Activated naive CD4-positive, alpha-beta T cell treated with anti-CD3 and anti-CD28 coated beads for 36 hours (primary cell): ENCODE measurements at regions of chr3 and their contacts with region 1.

Region 1: DNA sequence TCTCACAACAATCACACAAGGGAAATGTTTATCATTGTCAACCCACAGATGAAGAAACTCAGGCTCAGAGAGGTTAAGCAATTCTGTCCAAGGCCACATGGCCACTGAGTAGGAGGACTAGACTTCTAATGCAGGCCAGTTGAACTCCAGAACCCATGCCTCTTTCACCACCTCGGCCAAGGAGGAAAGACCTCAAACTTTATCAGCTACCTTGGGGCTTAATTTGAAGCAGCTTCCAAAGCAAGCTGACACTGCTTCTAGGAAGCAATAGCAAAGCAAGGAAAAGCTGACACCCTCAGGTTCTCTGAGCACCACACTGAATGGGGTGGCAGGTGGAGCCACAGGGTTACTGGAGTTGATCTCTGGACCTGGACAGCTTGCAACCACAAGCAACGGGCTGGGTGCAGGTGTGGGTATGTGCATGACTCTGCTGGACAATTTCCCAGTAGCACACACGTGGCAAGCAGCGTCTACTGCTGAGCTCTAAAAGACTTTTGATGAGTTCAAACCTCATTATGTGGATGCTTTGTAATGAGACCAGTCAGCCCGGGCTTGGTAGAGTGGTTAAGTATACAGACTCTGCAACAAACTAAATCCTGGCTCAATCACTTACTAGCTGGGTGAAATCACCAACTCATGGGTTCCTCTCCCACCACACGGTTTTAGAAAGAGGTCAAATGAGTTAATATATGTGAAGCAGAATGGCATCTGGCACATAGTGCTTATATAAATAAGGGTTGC is 23.1 kb downstream of the CCNL1 start:
- DNase-seq: no peak
- H3K4me3 Mint-ChIP-seq: no peak overlapping the region
- H3K27ac Mint-ChIP-seq: no peak overlapping the region
- H3K4me1 Mint-ChIP-seq: peaks cover 11% of the 10 kb centered on the region
- H3K27me3 Mint-ChIP-seq: no peaks in the 10 kb centered on the region

Region 2: DNA sequence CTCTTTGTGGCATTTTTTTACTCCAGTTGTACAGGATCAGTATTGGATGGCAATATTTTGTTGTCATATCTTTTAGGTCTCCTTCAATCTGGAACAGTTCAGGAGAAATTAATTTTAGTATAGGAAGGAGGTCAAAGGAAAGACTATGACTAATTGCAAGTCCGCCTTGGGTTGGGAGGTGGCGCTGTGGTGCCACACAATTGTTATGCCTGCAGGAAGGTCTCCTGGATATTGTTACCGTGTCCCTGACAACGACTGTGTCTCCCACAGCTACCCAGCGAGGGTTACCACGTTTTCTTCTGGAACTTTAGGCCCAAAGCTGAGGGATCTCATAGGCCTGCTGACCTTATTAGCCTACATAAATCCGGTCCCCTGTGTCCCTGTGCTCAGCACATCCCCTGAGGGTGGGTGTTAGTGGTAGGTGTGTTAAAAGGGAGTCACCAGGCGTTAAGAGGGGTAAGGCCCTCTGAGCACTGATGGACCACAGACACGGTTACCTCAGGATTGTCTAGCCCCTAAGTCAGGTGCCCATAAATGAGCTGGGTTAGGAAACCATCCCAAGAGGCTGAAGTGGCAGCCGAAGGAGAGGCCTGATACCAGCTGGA is 984.9 kb before region 1 on chr3:
- CTCF ChIA-PET with region 1: interaction called, 3 read pairs
- intact Hi-C with region 1: loop called (anchors 1 kb)
- DNase-seq: peak; percentile 77
- H3K4me3 Mint-ChIP-seq: no peak overlapping the region
- H3K27ac Mint-ChIP-seq: no peak overlapping the region
- H3K4me1 Mint-ChIP-seq: peaks cover 3% of the 10 kb centered on the region
- H3K27me3 Mint-ChIP-seq: no peaks in the 10 kb centered on the region

Region 3: DNA sequence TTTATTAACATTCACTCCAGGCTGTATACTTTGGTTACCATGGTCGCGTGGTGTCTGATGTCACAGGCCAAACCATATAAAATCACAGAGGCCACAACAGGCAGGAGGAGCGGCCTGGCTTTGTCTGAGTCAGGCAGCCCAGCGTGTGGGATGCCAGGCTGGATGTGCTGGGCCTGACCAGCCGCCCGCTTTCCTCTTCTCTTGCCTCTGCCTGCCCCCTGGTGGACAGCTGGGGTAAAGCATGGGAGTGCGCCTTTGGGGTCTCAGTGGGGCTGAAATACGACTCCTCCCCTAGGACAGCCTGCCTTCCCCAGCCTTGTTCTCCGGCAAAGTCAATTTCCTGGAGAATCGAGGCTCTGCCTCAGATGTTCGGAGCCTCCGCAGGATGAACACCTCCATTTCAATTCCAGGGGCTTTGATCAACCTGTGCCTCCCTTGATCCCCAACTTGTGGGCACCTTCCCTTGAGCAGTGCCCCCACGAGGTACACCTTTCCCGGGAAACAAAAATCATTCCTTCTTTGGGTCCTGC is 55.1 kb before region 1 on chr3:
- CTCF ChIA-PET with region 1: interaction called, 54 read pairs
- intact Hi-C with region 1: no loop called
- DNase-seq: peak; percentile 86
- H3K4me3 Mint-ChIP-seq: no peak overlapping the region
- H3K27ac Mint-ChIP-seq: no peak overlapping the region
- H3K4me1 Mint-ChIP-seq: peaks cover 9% of the 10 kb centered on the region
- H3K27me3 Mint-ChIP-seq: no peaks in the 10 kb centered on the region

Region 4: GRCh38 chr3:157104928-157105652 is 31.7 kb before region 1 on chr3:
- CTCF ChIA-PET with region 1: interaction called, 11 read pairs
- intact Hi-C with region 1: no loop called
- DNase-seq: no peak
- H3K4me3 Mint-ChIP-seq: no peak overlapping the region
- H3K27ac Mint-ChIP-seq: no peak overlapping the region
- H3K4me1 Mint-ChIP-seq: peaks cover 21% of the 10 kb centered on the region
- H3K27me3 Mint-ChIP-seq: no peaks in the 10 kb centered on the region

Region 5: DNA sequence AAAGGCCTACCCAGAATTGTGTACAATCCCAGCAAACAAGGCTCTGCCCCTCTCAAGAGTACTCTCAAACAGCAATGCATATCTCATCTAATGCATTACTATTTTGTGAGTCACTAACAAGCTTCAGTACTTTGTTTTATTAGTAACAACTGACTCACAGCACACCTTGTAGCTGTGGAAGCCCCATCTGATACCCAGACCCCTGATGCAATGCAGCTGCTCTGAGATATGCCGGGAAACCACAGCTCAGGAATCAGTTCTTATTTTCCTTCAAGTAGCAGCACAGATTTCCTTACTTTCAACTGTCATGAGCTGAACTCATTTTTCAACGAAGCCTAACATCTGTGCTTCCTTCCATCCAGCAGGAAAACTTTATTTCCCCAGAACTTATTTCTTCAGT is 14.7 kb before region 1 on chr3:
- CTCF ChIA-PET with region 1: interaction called, 20 read pairs
- intact Hi-C with region 1: no loop called
- DNase-seq: peak; percentile 52
- H3K4me3 Mint-ChIP-seq: no peak overlapping the region
- H3K27ac Mint-ChIP-seq: peak overlapping the region; percentile 16
- H3K4me1 Mint-ChIP-seq: peaks cover 26% of the 10 kb centered on the region
- H3K27me3 Mint-ChIP-seq: no peaks in the 10 kb centered on the region

Region 6: DNA sequence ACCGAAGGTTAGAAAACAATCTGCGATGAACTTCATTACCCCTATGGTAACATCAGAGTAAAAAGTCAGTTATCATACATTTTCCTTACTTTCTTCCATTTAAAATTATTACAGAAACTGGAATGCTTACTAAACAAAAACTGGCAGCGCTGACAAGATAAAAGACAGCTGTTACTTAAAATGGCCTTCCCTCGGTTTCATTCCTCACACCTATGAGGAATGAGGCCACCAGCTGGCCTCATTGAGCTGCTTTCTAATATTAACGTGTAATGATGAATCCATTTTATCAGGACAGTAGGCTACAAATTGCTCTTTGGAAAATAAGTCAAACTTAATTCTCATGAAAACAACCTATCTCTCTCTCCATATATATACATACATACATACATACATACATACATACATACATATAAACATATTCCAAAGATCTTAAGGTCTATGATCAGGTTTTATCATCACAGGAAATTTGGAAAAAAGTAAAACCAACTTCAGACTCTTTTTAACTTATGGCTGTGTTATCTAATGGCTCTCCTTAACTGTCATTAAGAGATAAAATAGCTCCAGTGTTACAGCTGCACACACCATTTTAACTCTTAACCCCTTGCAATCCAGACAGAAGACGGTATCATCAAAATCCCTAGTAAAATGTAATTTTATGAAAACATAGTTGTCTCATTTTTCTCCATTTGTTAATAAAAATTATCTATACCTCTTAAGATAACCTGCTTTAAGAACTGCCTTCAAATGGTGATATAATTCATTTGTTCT is 17.9 kb after region 1 on chr3:
- CTCF ChIA-PET with region 1: interaction called, 28 read pairs
- intact Hi-C with region 1: no loop called
- DNase-seq: no peak
- H3K4me3 Mint-ChIP-seq: peak overlapping the region; percentile 68
- H3K27ac Mint-ChIP-seq: peak overlapping the region; percentile 79
- H3K4me1 Mint-ChIP-seq: peaks cover 66% of the 10 kb centered on the region
- H3K27me3 Mint-ChIP-seq: no peaks in the 10 kb centered on the region